Activated T-helper 1 cell treated with anti-CD3 and anti-CD28 coated beads, Interleukin-12 subunit alpha, Interleukin-12 subunit beta, Interleukin-2, Interleukin-4 antibody, amounts not matched to agents 30 ng/mL and 10 ng/mL and 1 ng/mL, durations not matched to agents 14 hours and 24 hours and 36 hours (primary cell): ENCODE measurements at regions of chr17 and their contacts with region 1.

Region 1: DNA sequence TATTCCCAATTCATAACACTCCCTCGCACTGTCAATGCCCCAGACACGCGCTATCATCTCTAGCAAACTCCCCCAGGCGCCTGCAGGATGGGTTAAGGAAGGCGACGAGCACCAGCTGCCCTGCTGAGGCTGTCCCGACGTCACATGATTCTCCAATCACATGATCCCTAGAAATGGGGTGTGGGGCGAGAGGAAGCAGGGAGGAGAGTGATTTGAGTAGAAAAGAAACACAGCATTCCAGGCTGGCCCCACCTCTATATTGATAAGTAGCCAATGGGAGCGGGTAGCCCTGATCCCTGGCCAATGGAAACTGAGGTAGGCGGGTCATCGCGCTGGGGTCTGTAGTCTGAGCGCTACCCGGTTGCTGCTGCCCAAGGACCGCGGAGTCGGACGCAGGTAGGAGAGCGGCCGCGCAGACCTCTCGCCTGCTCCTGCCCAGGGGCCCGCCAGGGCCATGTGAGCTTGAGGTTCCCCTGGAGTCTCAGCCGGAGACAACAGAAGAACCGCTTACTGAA is at the start of gene GRN:
- DNase-seq: peak; percentile 84
- H3K4me3 Mint-ChIP-seq: peak within 1 kb of the TSS; percentile 93
- H3K27ac Mint-ChIP-seq: peak within 1 kb of the TSS; percentile 84
- H3K4me1 Mint-ChIP-seq: peaks cover 27% of the 10 kb centered on the region
- H3K27me3 Mint-ChIP-seq: peaks cover 9% of the 10 kb centered on the region
- total RNA-seq, gene GRN: 32.7 and 42.9 TPM in 2 replicates

Region 2: GRCh38 chr17:44070455-44071197 is 274.4 kb before region 1 on chr17 and contains the start of gene G6PC3:
- intact Hi-C with region 1: loop called (anchors 1 kb)
- DNase-seq: peak; percentile 78
- H3K4me3 Mint-ChIP-seq: peak within 1 kb of the TSS; percentile 98
- H3K27ac Mint-ChIP-seq: peak within 1 kb of the TSS; percentile 99
- H3K4me1 Mint-ChIP-seq: peaks cover 16% of the 10 kb centered on the region
- H3K27me3 Mint-ChIP-seq: no peaks in the 10 kb centered on the region
- total RNA-seq, gene G6PC3: 33.5 and 34.9 TPM in 2 replicates

Region 3: GRCh38 chr17:44210342-44211192 is 134.4 kb before region 1 on chr17:
- intact Hi-C with region 1: loop called (anchors 1 kb)
- DNase-seq: peak; percentile 89
- H3K4me3 Mint-ChIP-seq: peak overlapping the region; percentile 73
- H3K27ac Mint-ChIP-seq: peak overlapping the region; percentile 91
- H3K4me1 Mint-ChIP-seq: peaks cover 33% of the 10 kb centered on the region
- H3K27me3 Mint-ChIP-seq: no peaks in the 10 kb centered on the region

Region 4: GRCh38 chr17:44324571-44325275 is 20.3 kb before region 1 on chr17 and contains the start of gene SLC25A39:
- intact Hi-C with region 1: loop called (anchors 1 kb)
- DNase-seq: peak; percentile 96
- H3K4me3 Mint-ChIP-seq: peak within 1 kb of the TSS; percentile 93
- H3K27ac Mint-ChIP-seq: peak within 1 kb of the TSS; percentile 97
- H3K4me1 Mint-ChIP-seq: peaks cover 10% of the 10 kb centered on the region
- H3K27me3 Mint-ChIP-seq: no peaks in the 10 kb centered on the region
- total RNA-seq, gene SLC25A39: 169 and 180 TPM in 2 replicates

Region 5: GRCh38 chr17:44363613-44364159 is 18.7 kb after region 1 on chr17 and contains the start of gene FAM171A2:
- intact Hi-C with region 1: loop called (anchors 1 kb)
- DNase-seq: peak; percentile 59
- H3K4me3 Mint-ChIP-seq: peak within 1 kb of the TSS; percentile 78
- H3K27ac Mint-ChIP-seq: no peak within 1 kb of the TSS
- H3K4me1 Mint-ChIP-seq: no peaks in the 10 kb centered on the region
- H3K27me3 Mint-ChIP-seq: peaks cover 47% of the 10 kb centered on the region
- total RNA-seq, gene FAM171A2: 0.10 and 0.29 TPM in 2 replicates